Lower leg skin (tissue), 4 donors: ENCODE measurements at regions of chr12 and their contacts with region 1.

Region 1: GRCh38 chr12:72315858-72316257 is 43.7 kb downstream of the TRHDE start:
- DNase-seq: no peak
- H3K4me3 ChIP-seq: no peak overlapping the region
- CTCF ChIP-seq: no peak
- POLR2A ChIP-seq: no peak

Region 2: DNA sequence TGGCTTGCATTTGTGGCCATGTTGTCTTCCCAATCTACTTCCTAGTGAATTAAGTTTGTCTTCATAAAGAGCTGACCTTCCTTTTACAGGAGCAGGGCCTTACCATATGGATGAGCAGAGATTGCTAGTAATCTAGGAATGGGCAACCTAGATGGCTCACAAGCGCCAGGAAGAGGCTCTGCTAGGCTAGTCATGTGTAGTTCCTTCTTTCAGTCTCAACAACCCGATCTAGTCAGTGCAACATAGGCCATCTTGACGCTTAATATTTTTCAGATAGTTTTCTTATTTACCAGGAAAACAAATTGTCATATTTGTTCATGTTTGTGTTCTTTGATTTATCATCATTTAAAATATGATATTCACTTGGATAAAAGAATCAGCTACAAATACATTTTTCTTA is 425.4 kb before region 1 on chr12:
- intact Hi-C with region 1: loop called (anchors 5 kb)
- DNase-seq: no peak
- H3K4me3 ChIP-seq: no peak overlapping the region
- CTCF ChIP-seq: no peak
- POLR2A ChIP-seq: no peak

Region 3: DNA sequence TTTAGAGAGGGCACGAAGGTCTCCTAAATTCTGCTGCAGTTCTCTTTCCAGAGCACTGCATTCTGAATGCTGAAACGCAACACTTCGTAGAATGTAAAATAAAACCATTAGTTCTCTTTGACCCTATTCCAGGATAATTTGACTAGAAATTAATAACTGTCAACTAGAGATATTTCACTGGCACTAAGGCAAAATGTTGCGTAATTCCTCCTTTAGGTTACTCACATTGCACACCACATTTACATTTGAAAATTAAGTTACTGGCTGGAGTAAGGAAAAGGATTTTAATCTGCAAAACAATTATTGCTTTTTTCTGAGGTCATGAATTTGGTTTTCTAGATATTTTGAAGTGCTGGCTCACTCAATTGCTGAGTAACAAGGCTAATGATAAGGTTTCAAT is 101.7 kb before region 1 on chr12:
- intact Hi-C with region 1: no loop called
- DNase-seq: no peak
- H3K4me3 ChIP-seq: no peak overlapping the region
- CTCF ChIP-seq: no peak
- POLR2A ChIP-seq: no peak